Activated B cell treated with CpG ODN at 0.5 μM for 24 hours (primary cell): ENCODE measurements at regions of chr17 and their contacts with region 1.

Region 1: DNA sequence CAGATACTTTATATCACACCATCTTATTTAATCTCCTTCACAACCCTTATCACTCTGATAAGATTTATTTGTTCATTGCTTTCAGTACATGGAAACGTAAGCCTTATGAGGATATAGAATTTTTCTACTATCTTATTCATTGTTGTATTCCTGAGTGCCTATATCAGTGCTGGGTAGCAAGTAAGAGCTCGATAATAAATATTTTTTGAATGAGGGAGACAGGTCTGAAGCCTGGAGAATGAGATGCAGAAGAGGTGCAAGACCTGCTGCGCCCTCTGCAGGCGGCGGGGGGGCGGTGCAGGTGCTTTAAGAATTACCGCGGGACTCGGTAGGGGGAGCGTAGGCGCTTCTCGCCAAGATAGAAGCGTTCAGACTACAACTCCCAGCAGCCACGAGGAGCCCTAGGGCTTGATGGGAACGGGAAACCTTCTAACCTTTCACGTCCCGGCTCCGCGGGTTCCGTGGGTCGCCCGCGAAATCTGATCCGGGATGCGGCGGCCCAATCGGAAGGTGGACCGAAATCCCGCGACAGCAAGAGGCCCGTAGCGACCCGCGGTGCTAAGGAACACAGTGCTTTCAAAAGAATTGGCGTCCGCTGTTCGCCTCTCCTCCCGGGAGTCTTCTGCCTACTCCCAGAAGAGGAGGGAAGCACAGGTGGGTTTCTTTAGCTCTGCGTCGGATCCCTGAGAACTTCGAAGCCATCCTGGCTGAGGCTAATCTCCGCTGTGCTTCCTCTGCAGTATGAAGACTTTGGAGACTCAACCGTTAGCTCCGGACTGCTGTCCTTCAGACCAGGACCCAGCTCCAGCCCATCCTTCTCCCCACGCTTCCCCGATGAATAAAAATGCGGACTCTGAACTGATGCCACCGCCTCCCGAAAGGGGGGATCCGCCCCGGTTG is at the start of gene WRAP53:
- DNase-seq: peak; percentile 91
- ATAC-seq: peak; percentile 77
- H3K4me3 Mint-ChIP-seq: peak within 1 kb of the TSS; percentile 97
- H3K27ac Mint-ChIP-seq: peak within 1 kb of the TSS; percentile 99
- H3K4me1 Mint-ChIP-seq: peaks cover 49% of the 10 kb centered on the region
- H3K27me3 Mint-ChIP-seq: no peaks in the 10 kb centered on the region
- CTCF ChIP-seq: peak; percentile 94
- total RNA-seq, gene WRAP53: 17.1 and 17.6 TPM in 2 replicates

Region 2: GRCh38 chr17:5694551-5694950 is 1993.6 kb before region 1 on chr17:
- CTCF ChIA-PET with region 1: no interaction called
- POLR2A ChIA-PET with region 1: no interaction called
- intact Hi-C with region 1: no loop called
- DNase-seq: no peak
- ATAC-seq: no peak
- H3K4me3 Mint-ChIP-seq: no peak overlapping the region
- H3K27ac Mint-ChIP-seq: no peak overlapping the region
- H3K4me1 Mint-ChIP-seq: no peaks in the 10 kb centered on the region
- H3K27me3 Mint-ChIP-seq: peaks cover 5% of the 10 kb centered on the region
- CTCF ChIP-seq: no peak

Region 3: GRCh38 chr17:7306911-7307686 is 381.1 kb before region 1 on chr17 and contains the start of gene EIF5A:
- CTCF ChIA-PET with region 1: no interaction called
- POLR2A ChIA-PET with region 1: interaction called, 6 read pairs
- intact Hi-C with region 1: loop called (anchors 2 kb)
- DNase-seq: peak; percentile 98
- ATAC-seq: peak; percentile 72
- H3K4me3 Mint-ChIP-seq: peak within 1 kb of the TSS; percentile 96
- H3K27ac Mint-ChIP-seq: peak within 1 kb of the TSS; percentile 99
- H3K4me1 Mint-ChIP-seq: peaks cover 38% of the 10 kb centered on the region
- H3K27me3 Mint-ChIP-seq: no peaks in the 10 kb centered on the region
- CTCF ChIP-seq: no peak
- total RNA-seq, gene EIF5A: 656 and 664 TPM in 2 replicates

Region 4: DNA sequence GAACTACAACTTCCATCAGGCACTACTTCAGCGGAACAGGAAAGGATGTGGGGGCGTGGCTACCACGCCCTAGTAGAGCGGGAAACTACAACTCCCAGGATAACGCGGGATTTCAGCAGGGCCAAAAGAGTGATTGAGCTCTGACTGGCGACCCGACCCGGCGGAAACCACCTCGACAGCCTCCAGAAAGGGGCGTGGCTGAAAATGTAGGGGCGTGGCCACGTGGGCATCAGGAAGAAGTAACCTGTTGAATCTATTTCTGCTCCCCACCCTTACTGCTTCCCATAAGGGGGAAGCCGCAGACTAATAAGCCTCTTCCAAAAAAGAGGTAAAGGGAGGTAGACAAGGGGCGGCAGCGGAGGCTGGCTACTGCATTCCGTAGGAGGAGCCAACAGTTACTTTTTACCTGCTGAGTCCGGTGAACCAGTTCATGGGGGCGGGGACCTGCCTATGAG is 252.9 kb before region 1 on chr17 and contains the start of gene TMEM102:
- CTCF ChIA-PET with region 1: interaction called, 9 read pairs
- POLR2A ChIA-PET with region 1: interaction called, 45 read pairs
- intact Hi-C with region 1: loop called (anchors 1 kb)
- DNase-seq: peak; percentile 95
- ATAC-seq: peak; percentile 87
- H3K4me3 Mint-ChIP-seq: peak within 1 kb of the TSS; percentile 94
- H3K27ac Mint-ChIP-seq: peak within 1 kb of the TSS; percentile 93
- H3K4me1 Mint-ChIP-seq: peaks cover 45% of the 10 kb centered on the region
- H3K27me3 Mint-ChIP-seq: peaks cover 15% of the 10 kb centered on the region
- CTCF ChIP-seq: no peak
- total RNA-seq, gene TMEM102: 13.4 and 14.8 TPM in 2 replicates

Region 5: DNA sequence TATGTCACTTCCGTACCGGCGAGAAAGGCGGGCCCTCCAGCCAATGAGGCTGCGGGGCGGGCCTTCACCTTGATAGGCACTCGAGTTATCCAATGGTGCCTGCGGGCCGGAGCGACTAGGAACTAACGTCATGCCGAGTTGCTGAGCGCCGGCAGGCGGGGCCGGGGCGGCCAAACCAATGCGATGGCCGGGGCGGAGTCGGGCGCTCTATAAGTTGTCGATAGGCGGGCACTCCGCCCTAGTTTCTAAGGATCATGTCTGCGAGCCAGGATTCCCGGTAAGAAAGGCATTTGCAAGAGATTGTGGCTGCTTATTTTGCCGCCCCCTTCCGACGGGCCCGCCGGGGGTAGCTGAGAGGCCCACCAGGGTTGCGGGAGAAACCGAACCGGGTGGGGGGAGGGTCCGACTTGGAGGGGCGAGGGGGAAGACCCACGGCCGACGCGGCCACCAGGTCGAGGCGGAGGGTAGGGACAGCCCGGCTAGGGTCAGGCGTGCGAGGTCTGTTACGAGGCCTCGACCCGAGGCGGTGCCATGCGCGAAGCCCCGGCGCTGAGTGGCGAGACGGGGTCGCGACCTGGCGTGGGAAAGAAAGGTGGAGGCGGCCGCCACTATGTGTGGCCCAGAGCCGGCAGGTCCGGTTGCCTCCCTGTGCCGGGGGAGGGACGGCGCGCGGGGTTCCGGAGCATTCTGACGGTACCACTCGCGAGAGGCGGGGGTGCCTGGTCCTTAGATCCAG is 115.4 kb before region 1 on chr17:
- CTCF ChIA-PET with region 1: no interaction called
- POLR2A ChIA-PET with region 1: interaction called, 57 read pairs
- intact Hi-C with region 1: loop called (anchors 1 kb)
- DNase-seq: peak; percentile 100
- ATAC-seq: no peak
- H3K4me3 Mint-ChIP-seq: peak overlapping the region; percentile 98
- H3K27ac Mint-ChIP-seq: peak overlapping the region; percentile 99
- H3K4me1 Mint-ChIP-seq: peaks cover 48% of the 10 kb centered on the region
- H3K27me3 Mint-ChIP-seq: no peaks in the 10 kb centered on the region
- CTCF ChIP-seq: no peak

Region 6: GRCh38 chr17:7673239-7673638 is 14.9 kb before region 1 on chr17:
- CTCF ChIA-PET with region 1: interaction called, 6 read pairs
- POLR2A ChIA-PET with region 1: interaction called, 39 read pairs
- intact Hi-C with region 1: no loop called
- DNase-seq: no peak
- ATAC-seq: no peak
- H3K4me3 Mint-ChIP-seq: no peak overlapping the region
- H3K27ac Mint-ChIP-seq: no peak overlapping the region
- H3K4me1 Mint-ChIP-seq: peaks cover 7% of the 10 kb centered on the region
- H3K27me3 Mint-ChIP-seq: no peaks in the 10 kb centered on the region
- CTCF ChIP-seq: no peak

Region 7: DNA sequence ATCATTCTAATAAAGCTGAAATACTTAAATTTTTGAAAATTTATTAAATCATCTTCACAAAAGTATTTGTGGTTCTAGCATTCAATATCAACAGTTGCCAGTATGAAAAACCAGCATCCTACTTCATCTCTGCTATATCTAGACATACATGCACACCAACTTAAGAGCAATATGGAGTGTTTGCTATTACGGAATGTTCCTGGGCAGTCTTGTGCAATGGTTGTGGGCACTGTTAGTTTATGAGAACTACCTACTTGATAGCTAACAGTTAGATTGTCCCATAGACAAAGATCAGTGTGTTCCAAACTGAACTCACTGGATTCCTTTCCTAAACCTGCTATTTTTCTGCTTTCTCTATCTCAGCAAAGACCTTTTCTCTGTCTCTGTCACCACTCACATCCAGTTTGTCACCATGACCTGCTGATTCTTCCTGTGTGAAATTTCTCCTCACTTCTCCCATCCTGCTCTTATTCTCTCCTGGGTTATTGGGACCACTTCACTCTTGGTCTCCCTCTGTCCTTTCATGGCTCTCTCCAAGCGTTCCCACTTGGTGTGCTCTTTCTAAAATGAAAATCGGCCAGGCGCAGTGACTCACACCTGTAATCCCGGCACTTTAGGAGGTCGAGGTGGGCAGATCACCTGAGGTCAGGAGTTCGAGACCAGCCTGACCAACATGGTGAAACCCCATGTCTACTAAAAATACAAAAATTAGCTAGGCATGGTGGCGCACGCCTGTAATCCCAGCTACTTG is 271.5 kb after region 1 on chr17:
- CTCF ChIA-PET with region 1: no interaction called
- POLR2A ChIA-PET with region 1: no interaction called
- intact Hi-C with region 1: no loop called
- DNase-seq: no peak
- ATAC-seq: no peak
- H3K4me3 Mint-ChIP-seq: no peak overlapping the region
- H3K27ac Mint-ChIP-seq: no peak overlapping the region
- H3K4me1 Mint-ChIP-seq: no peaks in the 10 kb centered on the region
- H3K27me3 Mint-ChIP-seq: peaks cover 14% of the 10 kb centered on the region
- CTCF ChIP-seq: no peak

Region 8: DNA sequence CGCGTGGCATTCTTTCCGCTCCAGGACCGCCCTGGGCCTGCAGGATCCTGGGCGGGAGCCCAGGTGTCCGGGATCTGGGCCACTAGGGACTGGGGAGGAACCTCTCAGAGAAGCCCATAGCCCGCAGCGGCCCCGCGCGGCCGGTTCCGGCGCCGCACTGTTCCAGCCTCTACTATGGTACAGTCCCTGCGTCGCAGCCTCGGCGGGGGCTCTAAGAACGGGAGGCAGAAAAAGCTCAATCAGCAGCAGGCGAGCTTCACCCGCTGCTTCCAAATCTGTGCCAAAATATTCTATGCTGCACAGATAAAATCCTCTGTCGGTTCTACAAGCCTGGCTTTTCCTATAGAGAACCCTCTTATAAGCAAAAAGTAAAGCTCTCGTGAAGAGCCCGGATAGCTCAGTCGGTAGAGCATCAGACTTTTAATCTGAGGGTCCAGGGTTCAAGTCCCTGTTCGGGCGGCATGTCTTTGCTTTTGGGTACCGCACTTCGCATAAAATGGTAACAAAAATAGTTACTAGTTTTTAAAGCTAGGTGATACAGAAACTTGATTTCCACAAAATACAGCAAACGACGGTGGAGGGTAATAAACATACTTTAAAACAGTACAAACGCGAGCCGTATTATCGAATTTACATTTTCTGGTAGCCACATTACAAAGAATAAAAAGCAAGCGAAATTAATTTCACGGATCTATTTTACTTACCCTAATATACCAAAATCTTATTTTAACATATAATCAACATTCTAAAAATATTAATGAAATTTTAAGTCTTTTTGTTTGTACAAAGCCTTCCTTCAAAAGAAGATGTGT is 430.8 kb after region 1 on chr17:
- CTCF ChIA-PET with region 1: no interaction called
- POLR2A ChIA-PET with region 1: interaction called, 10 read pairs
- intact Hi-C with region 1: loop called (anchors 2 kb)
- DNase-seq: peak; percentile 81
- ATAC-seq: peak; percentile 68
- H3K4me3 Mint-ChIP-seq: peak overlapping the region; percentile 93
- H3K27ac Mint-ChIP-seq: peak overlapping the region; percentile 96
- H3K4me1 Mint-ChIP-seq: peaks cover 58% of the 10 kb centered on the region
- H3K27me3 Mint-ChIP-seq: peaks cover 56% of the 10 kb centered on the region
- CTCF ChIP-seq: peak; percentile 26

Region 9: DNA sequence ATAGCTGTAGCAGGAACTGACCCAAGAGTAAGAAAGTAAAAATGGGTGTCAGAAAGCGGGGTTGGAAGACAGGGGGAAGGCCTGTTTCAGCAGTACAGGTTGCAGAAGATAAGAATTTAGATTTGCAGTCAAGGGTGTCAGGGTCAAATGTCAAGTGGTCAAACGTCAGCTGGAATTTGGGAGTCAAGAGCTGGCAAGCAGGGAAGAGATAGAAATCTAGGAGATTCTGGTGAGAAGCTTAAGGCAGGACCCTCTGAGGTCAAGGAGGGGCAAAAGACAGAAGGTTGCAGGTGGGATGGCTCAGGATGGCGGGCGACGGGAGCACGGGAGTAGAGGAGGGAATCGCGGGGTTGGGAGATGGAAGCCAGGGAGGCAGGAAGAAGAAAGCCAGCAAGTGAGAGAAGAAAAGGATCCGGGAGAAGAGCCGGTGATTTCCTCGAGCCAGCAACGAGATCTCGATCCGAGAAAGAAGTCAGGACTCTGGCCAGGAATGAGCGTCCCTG is 606.7 kb after region 1 on chr17:
- CTCF ChIA-PET with region 1: no interaction called
- POLR2A ChIA-PET with region 1: interaction called, 13 read pairs
- intact Hi-C with region 1: no loop called
- DNase-seq: no peak
- ATAC-seq: no peak
- H3K4me3 Mint-ChIP-seq: peak overlapping the region; percentile 92
- H3K27ac Mint-ChIP-seq: peak overlapping the region; percentile 86
- H3K4me1 Mint-ChIP-seq: peaks cover 30% of the 10 kb centered on the region
- H3K27me3 Mint-ChIP-seq: no peaks in the 10 kb centered on the region
- CTCF ChIP-seq: no peak

Region 10: GRCh38 chr17:8532021-8532420 is 843.9 kb after region 1 on chr17:
- CTCF ChIA-PET with region 1: no interaction called
- POLR2A ChIA-PET with region 1: no interaction called
- intact Hi-C with region 1: no loop called
- DNase-seq: no peak
- ATAC-seq: no peak
- H3K4me3 Mint-ChIP-seq: no peak overlapping the region
- H3K27ac Mint-ChIP-seq: no peak overlapping the region
- H3K4me1 Mint-ChIP-seq: no peaks in the 10 kb centered on the region
- H3K27me3 Mint-ChIP-seq: no peaks in the 10 kb centered on the region
- CTCF ChIP-seq: no peak